Endothelial cell of umbilical vein (primary cell): ENCODE measurements at regions of chr4 and their contacts with region 1.

Region 1: DNA sequence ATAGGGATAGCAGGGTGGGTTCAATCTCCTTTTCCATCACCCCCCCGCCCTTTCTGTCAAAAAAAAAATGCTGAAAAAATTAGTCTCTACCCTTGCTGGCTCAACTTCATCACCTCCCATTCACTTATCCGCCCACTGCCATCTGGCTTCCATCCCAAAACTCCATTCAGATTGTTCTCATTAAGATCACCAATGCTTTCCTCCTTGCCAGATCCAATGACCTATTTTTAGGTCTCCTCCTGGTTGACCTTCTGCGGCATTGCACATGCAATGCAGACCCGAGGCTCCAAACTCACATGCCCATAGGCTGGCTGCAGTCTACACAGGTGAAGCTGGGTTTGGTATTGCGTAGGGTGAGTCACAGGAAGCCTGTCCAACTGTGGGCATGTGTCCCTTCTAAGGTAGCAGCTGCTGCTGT is 21.1 kb upstream of the STIM2 start:
- DNase-seq: no peak
- H3K4me3 ChIP-seq: no peak overlapping the region
- H3K27ac ChIP-seq: no peak overlapping the region
- H3K4me1 ChIP-seq: no peaks in the 10 kb centered on the region
- H3K27me3 ChIP-seq: peaks cover 0 to 7% of the 10 kb centered on the region in 2 experiments
- CTCF ChIP-seq: no peak
- POLR2A ChIP-seq: no peak

Region 2: DNA sequence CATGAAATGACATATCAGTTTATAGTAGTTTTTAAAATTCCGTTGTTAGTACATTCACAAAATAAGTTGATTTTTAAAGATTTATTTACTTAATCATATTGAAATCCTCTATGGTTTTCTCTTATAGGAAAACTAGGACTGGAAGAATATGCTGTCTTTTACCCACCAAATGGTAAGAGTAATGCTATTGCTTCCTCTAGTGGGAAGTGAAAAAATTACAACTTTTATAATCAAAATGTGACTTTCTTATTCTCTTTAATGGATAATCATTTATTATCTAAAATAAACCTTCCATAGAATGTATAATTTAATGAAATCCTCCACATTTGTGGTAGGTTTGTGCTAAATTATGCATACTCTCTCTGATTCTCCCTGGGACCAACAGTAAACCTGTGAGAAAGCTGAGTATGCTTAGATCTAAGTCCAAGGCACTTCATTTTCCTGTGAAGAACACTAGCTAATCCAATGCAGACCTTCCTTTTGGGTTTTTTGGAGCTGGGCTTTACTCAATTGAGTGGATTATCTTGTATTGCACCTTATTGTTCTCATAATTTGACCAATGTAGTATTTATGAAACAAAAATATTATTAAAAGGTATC is 119.5 kb before region 1 on chr4:
- CTCF ChIA-PET with region 1: no interaction called
- POLR2A ChIA-PET with region 1: no interaction called
- dilution Hi-C with region 1: no loop called
- intact Hi-C with region 1: no loop called
- DNase-seq: peak; percentile 45
- H3K4me3 ChIP-seq: no peak overlapping the region
- H3K27ac ChIP-seq: no peak overlapping the region
- H3K4me1 ChIP-seq: no peaks in the 10 kb centered on the region
- H3K27me3 ChIP-seq: no peaks in the 10 kb centered on the region
- CTCF ChIP-seq: peak in 1 of 2 donors; percentile 34
- POLR2A ChIP-seq: no peak

Region 3: GRCh38 chr4:26854701-26855100 is 15.2 kb after region 1 on chr4:
- CTCF ChIA-PET with region 1: no interaction called
- POLR2A ChIA-PET with region 1: no interaction called
- dilution Hi-C with region 1: no loop called
- intact Hi-C with region 1: loop called (anchors 2 kb)
- DNase-seq: no peak
- H3K4me3 ChIP-seq: no peak overlapping the region
- H3K27ac ChIP-seq: no peak overlapping the region
- H3K4me1 ChIP-seq: peaks cover 21% of the 10 kb centered on the region
- H3K27me3 ChIP-seq: peaks cover 2 to 12% of the 10 kb centered on the region in 2 experiments
- CTCF ChIP-seq: no peak
- POLR2A ChIP-seq: no peak

Region 4: GRCh38 chr4:27442146-27442545 is 602.6 kb after region 1 on chr4:
- CTCF ChIA-PET with region 1: no interaction called
- POLR2A ChIA-PET with region 1: no interaction called
- dilution Hi-C with region 1: no loop called
- intact Hi-C with region 1: no loop called
- DNase-seq: no peak
- H3K4me3 ChIP-seq: no peak overlapping the region
- H3K27ac ChIP-seq: no peak overlapping the region
- H3K4me1 ChIP-seq: no peaks in the 10 kb centered on the region
- H3K27me3 ChIP-seq: no peaks in the 10 kb centered on the region
- CTCF ChIP-seq: no peak
- POLR2A ChIP-seq: no peak

Region 5: GRCh38 chr4:27534488-27534887 is 694.9 kb after region 1 on chr4:
- CTCF ChIA-PET with region 1: no interaction called
- POLR2A ChIA-PET with region 1: no interaction called
- dilution Hi-C with region 1: no loop called
- intact Hi-C with region 1: no loop called
- DNase-seq: no peak
- H3K4me3 ChIP-seq: no peak overlapping the region
- H3K27ac ChIP-seq: no peak overlapping the region
- H3K4me1 ChIP-seq: no peaks in the 10 kb centered on the region
- H3K27me3 ChIP-seq: no peaks in the 10 kb centered on the region
- CTCF ChIP-seq: no peak
- POLR2A ChIP-seq: no peak